ENCODE measurements at regions of chr19 and their contacts with region 1.

Region 1: GRCh38 chr19:15466851-15467733 is 2.7 kb upstream of the RASAL3 start:
- DNase-seq: peak; percentile 80
- ATAC-seq: peak; percentile 62
- H3K4me3 Mint-ChIP-seq: peak overlapping the region; percentile 47
- H3K27ac Mint-ChIP-seq: peak overlapping the region; percentile 95
- H3K4me1 Mint-ChIP-seq: peaks cover 62% of the 10 kb centered on the region
- H3K27me3 Mint-ChIP-seq: peaks cover 3% of the 10 kb centered on the region

Region 2: DNA sequence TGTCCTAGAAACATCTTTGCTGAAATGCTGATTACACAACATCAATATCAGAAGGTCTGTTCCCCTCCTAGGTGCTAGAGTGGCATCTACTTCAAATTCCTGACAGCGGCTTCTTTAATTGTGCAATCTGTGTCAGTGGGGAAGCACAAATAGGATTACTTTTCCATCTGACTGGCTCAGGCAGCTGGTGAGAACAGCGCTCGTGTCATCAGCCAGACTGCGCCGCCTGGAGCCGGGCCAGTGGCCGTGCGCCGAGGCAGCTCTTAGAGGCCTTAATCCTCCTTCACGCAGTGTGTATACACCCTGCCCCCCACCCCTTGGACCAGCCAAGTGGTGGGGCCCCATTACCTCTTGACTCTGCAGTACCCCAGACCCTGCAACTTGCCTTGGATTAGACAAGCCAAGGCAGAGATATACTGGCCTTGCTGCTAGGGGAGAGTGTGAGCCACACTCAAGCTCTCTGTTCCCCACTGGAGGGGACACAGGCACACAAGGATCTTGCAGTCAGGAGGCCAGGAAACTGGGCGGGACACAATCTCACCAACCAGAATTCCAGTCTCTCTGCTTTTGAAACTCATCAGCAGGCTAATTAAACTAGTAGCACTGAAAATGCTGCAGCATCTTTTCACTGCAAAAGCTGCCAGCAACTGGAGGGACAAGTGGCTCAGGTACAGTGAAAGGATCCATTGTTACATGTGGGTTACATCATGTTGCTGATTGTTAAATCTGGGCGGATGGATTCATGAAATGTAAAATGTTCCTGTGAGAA is 186.0 kb before region 1 on chr19:
- CTCF ChIA-PET with region 1: no interaction called
- POLR2A ChIA-PET with region 1: no interaction called
- intact Hi-C with region 1: loop called in 1 of 2 experiments (anchors 5 kb)
- DNase-seq: no peak
- ATAC-seq: no peak
- H3K4me3 Mint-ChIP-seq: no peak overlapping the region
- H3K27ac Mint-ChIP-seq: peak overlapping the region; percentile 84
- H3K4me1 Mint-ChIP-seq: peaks cover 89% of the 10 kb centered on the region
- H3K27me3 Mint-ChIP-seq: no peaks in the 10 kb centered on the region

Region 3: DNA sequence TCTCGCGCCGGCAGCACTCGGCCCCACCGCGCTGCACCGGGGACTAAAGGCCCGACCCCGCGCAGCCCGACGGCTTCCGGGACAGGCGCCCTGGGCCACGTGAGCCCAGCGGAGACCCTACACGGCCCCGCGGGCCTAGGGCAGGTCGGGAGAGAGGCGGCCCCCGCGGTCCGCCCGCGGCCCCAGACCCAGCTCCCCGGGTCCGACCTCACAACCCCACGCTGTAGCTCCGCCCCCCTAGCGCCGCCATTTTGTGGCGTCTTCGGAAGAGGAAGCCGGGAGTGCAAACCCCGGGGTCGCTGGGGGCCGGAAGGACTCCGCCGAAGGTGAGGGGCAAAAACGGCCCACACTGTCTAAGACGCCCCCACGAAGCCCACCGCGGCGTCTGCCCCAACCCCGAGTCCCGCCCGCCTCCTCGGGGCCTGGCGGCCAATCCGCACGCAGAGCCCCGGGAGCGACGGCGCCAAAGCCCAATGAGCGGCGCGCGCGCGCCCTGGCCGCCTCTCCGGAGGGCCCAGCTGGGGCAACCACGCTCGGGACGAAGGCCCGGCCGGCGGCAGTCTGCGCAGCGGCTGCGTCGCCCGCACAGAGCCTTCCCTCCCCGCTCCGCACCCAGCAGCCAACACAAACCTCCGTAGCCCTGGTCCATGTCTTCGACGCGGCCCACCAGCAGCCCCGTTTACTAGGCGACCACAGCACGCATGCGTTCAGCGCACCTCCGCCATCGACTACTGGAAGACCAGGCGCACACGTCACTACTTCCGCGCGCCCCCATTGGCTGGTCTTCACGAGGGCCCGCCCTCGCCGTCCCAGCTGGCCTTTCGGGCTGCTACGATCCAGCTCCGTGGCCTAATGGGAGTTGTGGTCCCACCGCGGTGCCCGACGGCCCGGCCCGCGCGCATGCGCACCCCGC is 87.8 kb before region 1 on chr19 and contains the start of gene AKAP8:
- CTCF ChIA-PET with region 1: no interaction called
- POLR2A ChIA-PET with region 1: interaction called, 3 read pairs
- intact Hi-C with region 1: loop called in 1 of 2 experiments (anchors 1 kb)
- DNase-seq: peak; percentile 99
- ATAC-seq: peak; percentile 91
- H3K4me3 Mint-ChIP-seq: peak within 1 kb of the TSS; percentile 88
- H3K27ac Mint-ChIP-seq: peak within 1 kb of the TSS; percentile 100
- H3K4me1 Mint-ChIP-seq: peaks cover 37% of the 10 kb centered on the region
- H3K27me3 Mint-ChIP-seq: no peaks in the 10 kb centered on the region
- total RNA-seq, gene AKAP8: 47.9 to 54.3 TPM

Region 4: DNA sequence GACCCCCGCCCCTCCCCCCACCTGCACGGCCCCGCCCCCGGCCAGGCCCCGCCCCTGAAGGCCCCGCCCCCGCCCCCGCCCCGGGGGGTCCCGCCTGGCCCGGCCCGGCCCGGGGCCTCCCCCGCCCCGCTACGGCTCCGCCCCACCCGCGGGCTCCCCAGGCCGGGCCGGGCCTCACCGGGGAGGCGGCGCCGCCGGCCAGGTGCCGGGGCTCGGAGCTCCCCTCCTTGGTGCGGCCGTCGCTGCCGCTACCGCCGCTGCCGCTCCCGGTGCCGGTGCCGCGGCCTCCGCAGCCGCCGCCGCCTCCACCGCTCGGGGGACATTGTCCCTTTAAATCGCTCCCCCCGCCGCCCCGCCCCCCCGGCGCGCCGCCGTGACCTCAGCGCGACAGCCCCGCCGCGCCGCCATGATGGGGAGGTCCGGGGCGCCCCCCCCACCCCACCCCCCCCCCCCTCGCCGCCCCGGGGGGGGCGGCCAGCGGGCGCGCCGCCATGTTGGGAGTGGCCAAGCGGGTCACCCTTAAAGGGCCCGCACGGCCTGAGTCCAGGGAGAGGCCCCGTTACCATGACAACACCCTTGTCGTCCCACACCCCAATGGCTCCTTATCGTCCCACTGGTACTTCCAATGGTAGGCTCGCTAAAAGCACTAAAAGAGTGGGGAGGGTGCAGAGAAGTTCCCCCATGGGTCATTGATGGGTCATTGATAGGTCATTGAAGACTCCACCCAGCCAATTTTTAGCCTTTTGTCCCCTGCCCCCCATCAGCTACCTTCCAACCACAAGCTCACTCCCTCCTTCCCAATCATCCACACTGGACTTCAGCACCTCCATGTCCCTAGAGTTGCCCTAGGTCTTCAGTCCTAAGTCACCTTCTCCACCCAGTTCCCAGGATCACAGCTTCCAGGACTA is 17.2 kb before region 1 on chr19 and contains the start of gene WIZ:
- CTCF ChIA-PET with region 1: interaction called, 3 read pairs
- POLR2A ChIA-PET with region 1: interaction called, 5 read pairs
- intact Hi-C with region 1: loop called in 1 of 2 experiments (anchors 1 kb)
- DNase-seq: peak; percentile 90
- ATAC-seq: peak; percentile 68
- H3K4me3 Mint-ChIP-seq: peak within 1 kb of the TSS; percentile 55
- H3K27ac Mint-ChIP-seq: peak within 1 kb of the TSS; percentile 79
- H3K4me1 Mint-ChIP-seq: peaks cover 17% of the 10 kb centered on the region
- H3K27me3 Mint-ChIP-seq: no peaks in the 10 kb centered on the region
- total RNA-seq, gene WIZ: 21.2 to 22.6 TPM

Region 5: DNA sequence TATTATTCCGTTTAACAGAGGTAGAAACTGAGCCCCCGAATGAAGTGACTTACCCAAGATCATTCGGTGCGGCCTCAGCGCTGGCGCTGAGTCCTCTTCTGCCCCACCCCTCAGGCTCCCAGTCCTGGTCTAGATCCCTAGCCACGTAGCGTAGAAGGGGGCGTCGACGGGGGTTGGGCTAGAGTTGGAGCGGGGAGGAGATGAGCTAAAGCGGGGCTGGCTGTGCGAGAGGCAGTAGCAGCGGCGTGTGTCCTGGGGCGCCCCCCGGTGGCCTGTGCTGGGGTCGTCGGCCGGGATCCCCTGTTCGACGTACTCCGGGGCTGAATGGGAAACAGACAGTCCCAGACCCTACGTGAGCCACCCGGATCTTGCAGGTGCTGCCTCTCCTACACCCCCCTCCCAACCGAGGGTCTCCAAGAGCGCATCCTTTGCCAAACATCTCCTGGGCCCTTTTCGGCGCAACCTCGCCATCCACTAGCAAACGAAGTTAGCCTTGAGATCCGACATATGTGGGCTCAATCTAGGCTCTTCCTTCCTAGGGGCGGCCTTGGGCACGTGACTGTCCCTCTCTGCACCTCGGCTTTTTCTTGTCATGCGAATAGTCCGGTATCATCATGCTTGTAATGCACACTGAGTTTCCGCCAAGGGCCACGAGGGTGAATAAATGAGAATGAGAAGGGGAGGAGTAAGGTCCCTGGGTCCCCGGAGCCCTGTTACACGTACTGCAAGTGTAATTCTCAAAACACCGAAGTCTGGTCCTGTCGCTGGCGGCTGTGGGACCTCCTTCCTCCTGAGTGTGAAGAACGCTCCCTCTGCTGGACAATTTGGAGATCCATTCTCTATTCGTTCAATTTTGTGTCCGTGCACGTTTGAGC is 88.9 kb after region 1 on chr19:
- CTCF ChIA-PET with region 1: interaction called, 7 read pairs
- POLR2A ChIA-PET with region 1: no interaction called
- intact Hi-C with region 1: loop called (anchors 1 to 2 kb)
- DNase-seq: peak; percentile 99
- ATAC-seq: peak; percentile 86
- H3K4me3 Mint-ChIP-seq: peak overlapping the region; percentile 73
- H3K27ac Mint-ChIP-seq: peak overlapping the region; percentile 85
- H3K4me1 Mint-ChIP-seq: peaks cover 18% of the 10 kb centered on the region
- H3K27me3 Mint-ChIP-seq: peaks cover 2% of the 10 kb centered on the region

Region 6: DNA sequence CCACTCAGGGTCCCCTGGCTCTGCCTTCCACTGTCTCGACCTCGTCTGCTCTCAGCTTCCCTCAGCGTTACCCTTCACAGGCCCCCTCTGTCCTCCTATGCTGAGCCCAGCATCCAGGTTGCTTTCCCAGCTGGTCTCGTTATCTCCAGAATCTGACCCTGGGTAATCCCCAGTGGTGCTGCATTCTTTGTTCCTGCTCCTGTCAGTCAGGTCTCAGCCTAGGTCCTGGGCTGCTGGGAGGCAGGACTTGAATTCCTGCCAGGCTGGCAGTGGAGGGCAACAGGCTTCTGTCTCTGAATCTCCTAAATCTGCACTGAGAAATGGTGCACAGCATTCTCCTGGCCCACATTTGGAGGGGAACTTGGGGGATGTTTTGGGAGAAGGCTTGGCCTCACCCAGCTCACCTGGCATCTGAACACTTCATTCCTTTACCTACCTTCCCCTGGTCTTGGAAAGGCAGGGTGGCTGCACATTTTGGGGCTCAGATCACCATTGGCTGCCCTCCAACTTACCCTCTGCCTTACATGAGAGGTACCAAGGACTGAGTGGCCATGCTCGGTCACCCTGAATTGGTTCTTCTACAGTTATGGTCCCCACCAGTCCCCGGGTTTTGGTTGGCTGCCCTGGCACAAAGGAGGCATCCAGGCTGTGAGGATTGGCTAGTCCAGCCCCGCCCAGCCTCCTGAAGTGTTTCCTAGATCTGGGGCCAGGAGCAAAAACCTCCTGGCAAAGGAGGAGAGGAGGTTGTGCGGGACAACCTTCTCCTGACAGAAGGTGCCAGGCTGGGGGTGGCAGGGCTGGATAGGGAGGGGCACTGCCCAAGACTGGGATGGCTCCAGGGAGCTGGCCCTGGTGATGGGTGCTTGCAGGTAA is 147.7 kb after region 1 on chr19 and contains the start of gene CYP4F8:
- CTCF ChIA-PET with region 1: no interaction called
- POLR2A ChIA-PET with region 1: no interaction called
- intact Hi-C with region 1: no loop called
- DNase-seq: no peak
- ATAC-seq: no peak
- H3K4me3 Mint-ChIP-seq: no peak within 1 kb of the TSS
- H3K27ac Mint-ChIP-seq: peak within 1 kb of the TSS; percentile 37
- H3K4me1 Mint-ChIP-seq: no peaks in the 10 kb centered on the region
- H3K27me3 Mint-ChIP-seq: peaks cover 2% of the 10 kb centered on the region
- total RNA-seq, gene CYP4F8: not detected

Measured in activated CD4-positive, alpha-beta T cell treated with anti-CD3 and anti-CD28 coated beads for 36 hours (primary cell).